ENCODE measurements at regions of chr14 and their contacts with region 1.

Region 1: DNA sequence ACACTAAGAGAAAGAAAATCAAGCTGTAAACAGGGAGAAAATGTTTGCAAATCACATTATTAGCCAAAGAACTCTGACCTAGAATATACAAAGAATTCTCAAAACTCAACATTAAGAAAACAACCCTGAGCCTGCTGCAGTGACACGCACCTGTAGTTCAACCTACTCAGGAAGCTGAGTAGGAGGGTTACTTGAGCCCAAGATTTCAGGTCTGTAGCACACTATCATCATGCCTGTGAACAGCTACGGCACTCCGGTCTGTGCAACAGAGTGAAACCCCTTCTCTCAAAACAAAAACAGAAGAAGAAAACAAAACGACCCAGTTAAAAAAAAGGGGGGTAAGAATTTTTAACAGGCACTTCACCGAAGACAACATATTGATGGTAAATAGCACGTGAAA is 20.8 kb downstream of the SAV1 start:
- DNase-seq: peak; percentile 45
- ATAC-seq: peak; percentile 94
- H3K4me3 ChIP-seq: peak overlapping the region; percentile 10
- H3K27ac ChIP-seq: peak overlapping the region; percentile 45
- H3K4me1 ChIP-seq: peaks cover 38% of the 10 kb centered on the region
- H3K27me3 ChIP-seq: no peaks in the 10 kb centered on the region
- CTCF ChIP-seq: no peak
- EP300 ChIP-seq: no peak
- POLR2A ChIP-seq: 0 out of 2 replicates have a peak, but pooled peaks have one; percentile 29
- RAD21 ChIP-seq: no peak

Region 2: GRCh38 chr14:50501642-50502041 is 145.6 kb before region 1 on chr14:
- CTCF ChIA-PET with region 1: no interaction called
- POLR2A ChIA-PET with region 1: no interaction called
- RAD21 ChIA-PET with region 1: no interaction called
- SMC1A ChIA-PET with region 1: no interaction called
- in situ Hi-C with region 1: no loop called
- intact Hi-C with region 1: no loop called
- DNase-seq: no peak
- ATAC-seq: no peak
- H3K4me3 ChIP-seq: no peak overlapping the region
- H3K27ac ChIP-seq: no peak overlapping the region
- H3K4me1 ChIP-seq: no peaks in the 10 kb centered on the region
- H3K27me3 ChIP-seq: no peaks in the 10 kb centered on the region
- CTCF ChIP-seq: no peak
- EP300 ChIP-seq: no peak
- POLR2A ChIP-seq: no peak
- RAD21 ChIP-seq: no peak

Region 3: GRCh38 chr14:50512463-50512862 is 134.8 kb before region 1 on chr14:
- CTCF ChIA-PET with region 1: no interaction called
- POLR2A ChIA-PET with region 1: no interaction called
- RAD21 ChIA-PET with region 1: no interaction called
- SMC1A ChIA-PET with region 1: no interaction called
- in situ Hi-C with region 1: no loop called
- intact Hi-C with region 1: no loop called
- DNase-seq: no peak
- ATAC-seq: no peak
- H3K4me3 ChIP-seq: no peak overlapping the region
- H3K27ac ChIP-seq: no peak overlapping the region
- H3K4me1 ChIP-seq: no peaks in the 10 kb centered on the region
- H3K27me3 ChIP-seq: no peaks in the 10 kb centered on the region
- CTCF ChIP-seq: no peak
- EP300 ChIP-seq: no peak
- POLR2A ChIP-seq: no peak
- RAD21 ChIP-seq: no peak

Region 4: DNA sequence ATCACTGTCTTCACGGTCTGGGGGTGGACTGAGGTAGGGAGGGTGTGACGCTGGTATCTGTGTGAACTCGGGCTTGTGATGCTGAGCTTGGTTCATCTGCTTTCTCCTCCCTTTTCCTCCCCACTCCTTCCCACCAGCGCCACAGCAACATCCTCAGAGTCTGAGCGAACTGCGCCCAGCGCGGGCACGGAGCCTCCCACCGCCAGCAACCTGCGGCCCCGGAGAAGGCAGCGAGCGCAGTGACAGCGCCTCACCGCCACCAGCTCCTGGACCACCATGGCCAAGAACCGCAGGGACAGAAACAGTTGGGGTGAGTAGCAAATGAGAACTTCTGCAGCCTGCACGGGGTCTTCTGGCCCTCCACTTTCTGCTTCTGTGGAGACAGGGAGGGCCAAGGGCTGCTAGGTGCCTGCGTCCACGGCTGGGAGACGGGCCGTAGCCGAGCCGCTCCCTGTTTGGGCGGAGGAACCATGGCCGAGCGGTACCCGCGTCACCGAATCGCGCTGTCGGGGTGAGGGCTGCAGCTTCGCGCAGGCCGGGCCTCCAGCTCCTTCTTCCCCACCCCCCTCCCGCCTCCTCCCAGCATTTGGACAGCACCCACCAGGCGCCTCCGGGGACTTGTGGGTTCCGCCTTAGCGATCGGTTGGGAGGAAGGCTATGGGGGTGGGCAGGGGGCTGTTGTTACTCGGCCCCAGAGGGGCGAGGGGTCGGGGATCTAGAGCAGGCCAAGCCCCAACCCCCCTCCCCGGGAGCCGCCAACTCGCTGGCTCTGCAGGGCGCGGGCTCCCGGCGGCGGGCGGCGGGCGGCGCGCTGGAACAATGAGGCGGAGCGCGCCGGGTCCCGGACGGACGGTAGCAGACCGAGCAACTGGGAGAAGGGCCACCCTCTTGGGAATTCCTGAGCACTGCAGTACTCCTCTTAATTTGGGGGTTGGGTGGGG is 87.0 kb before region 1 on chr14 and contains the start of gene ATL1:
- CTCF ChIA-PET with region 1: no interaction called
- POLR2A ChIA-PET with region 1: no interaction called
- RAD21 ChIA-PET with region 1: no interaction called
- SMC1A ChIA-PET with region 1: no interaction called
- in situ Hi-C with region 1: no loop called
- intact Hi-C with region 1: no loop called
- DNase-seq: no peak
- ATAC-seq: peak; percentile 89
- H3K4me3 ChIP-seq: peak within 1 kb of the TSS; percentile 67
- H3K27ac ChIP-seq: no peak within 1 kb of the TSS
- H3K4me1 ChIP-seq: peaks cover 8% of the 10 kb centered on the region
- H3K27me3 ChIP-seq: peaks cover 9 to 12% of the 10 kb centered on the region in 2 experiments
- CTCF ChIP-seq: no peak
- EP300 ChIP-seq: no peak
- POLR2A ChIP-seq: no peak
- RAD21 ChIP-seq: no peak
- polyA plus RNA-seq, gene ATL1: 0.18 TPM in 1 of 2 experiments, not detected in the other

Region 5: DNA sequence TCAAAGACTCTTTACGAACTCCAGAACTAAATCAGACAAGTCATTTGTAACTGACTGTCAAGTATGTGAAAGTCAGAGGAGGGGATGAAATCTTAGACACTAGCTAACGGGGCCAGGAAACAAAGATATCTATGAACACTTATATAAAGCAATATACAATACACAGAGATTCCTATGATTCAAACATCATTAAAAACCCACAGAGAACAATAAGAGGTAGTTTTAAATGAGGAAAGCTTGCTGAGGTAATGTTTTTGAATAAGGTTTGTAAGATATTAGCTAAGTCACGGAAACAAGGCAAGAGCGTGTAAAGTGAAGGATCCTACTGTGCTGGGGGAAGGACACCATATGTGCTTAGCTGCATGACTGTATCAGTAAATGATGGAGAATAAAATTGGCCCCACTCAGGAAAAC is 15.9 kb before region 1 on chr14:
- CTCF ChIA-PET with region 1: no interaction called
- POLR2A ChIA-PET with region 1: no interaction called
- RAD21 ChIA-PET with region 1: no interaction called
- SMC1A ChIA-PET with region 1: interaction called, 16 read pairs
- in situ Hi-C with region 1: no loop called
- intact Hi-C with region 1: no loop called
- DNase-seq: no peak
- ATAC-seq: no peak
- H3K4me3 ChIP-seq: no peak overlapping the region
- H3K27ac ChIP-seq: no peak overlapping the region
- H3K4me1 ChIP-seq: no peaks in the 10 kb centered on the region
- H3K27me3 ChIP-seq: no peaks in the 10 kb centered on the region
- CTCF ChIP-seq: no peak
- EP300 ChIP-seq: no peak
- POLR2A ChIP-seq: no peak
- RAD21 ChIP-seq: no peak